Naive thymus-derived CD4-positive, alpha-beta T cell (primary cell): ENCODE measurements at regions of chr19 and their contacts with region 1.

Region 1: GRCh38 chr19:6737284-6738046 is at the start of gene GPR108:
- DNase-seq: peak; percentile 94 to 100 (median 99)
- ATAC-seq: peak; percentile 85
- H3K4me3 ChIP-seq: peak within 1 kb of the TSS; percentile 87
- H3K4me3 Mint-ChIP-seq: peak within 1 kb of the TSS; percentile 89 to 98 (median 96)
- H3K27ac ChIP-seq: peak within 1 kb of the TSS; percentile 86
- H3K27ac Mint-ChIP-seq: peak within 1 kb of the TSS; percentile 90 to 99 (median 96)
- H3K4me1 ChIP-seq: peaks cover 31 to 32% of the 10 kb centered on the region in 2 donors
- H3K4me1 Mint-ChIP-seq: peaks cover 24 to 41% (median 37%) of the 10 kb centered on the region in 7 donors
- H3K27me3 ChIP-seq: no peaks in the 10 kb centered on the region
- H3K27me3 Mint-ChIP-seq: peaks cover 0 to 3% (median 0%) of the 10 kb centered on the region in 5 donors
- total RNA-seq, gene GPR108: 36.1 to 81.6 (median 61.9) TPM

Region 2: GRCh38 chr19:5977785-5978605 is 759.5 kb before region 1 on chr19 and contains the start of gene RANBP3:
- CTCF ChIA-PET with region 1: no interaction called
- POLR2A ChIA-PET with region 1: no interaction called
- intact Hi-C with region 1: loop called in 1 of 2 experiments (anchors 10 kb)
- DNase-seq: peak; percentile 94 to 99 (median 99)
- ATAC-seq: peak; percentile 94
- H3K4me3 ChIP-seq: peak within 1 kb of the TSS; percentile 78
- H3K4me3 Mint-ChIP-seq: peak within 1 kb of the TSS; percentile 92 to 99 (median 96)
- H3K27ac ChIP-seq: peak within 1 kb of the TSS; percentile 94
- H3K27ac Mint-ChIP-seq: peak within 1 kb of the TSS; percentile 91 to 97 (median 95)
- H3K4me1 ChIP-seq: peaks cover 31 to 45% of the 10 kb centered on the region in 2 donors
- H3K4me1 Mint-ChIP-seq: peaks cover 42 to 65% (median 55%) of the 10 kb centered on the region in 7 donors
- H3K27me3 ChIP-seq: no peaks in the 10 kb centered on the region
- H3K27me3 Mint-ChIP-seq: peaks cover 0 to 2% (median 0%) of the 10 kb centered on the region in 5 donors
- total RNA-seq, gene RANBP3: 88.3 to 104 (median 94.0) TPM

Region 3: GRCh38 chr19:6424939-6425731 is 312.3 kb before region 1 on chr19:
- CTCF ChIA-PET with region 1: no interaction called
- POLR2A ChIA-PET with region 1: no interaction called
- intact Hi-C with region 1: loop called (anchors 1 kb)
- DNase-seq: peak; percentile 66 to 100 (median 99)
- ATAC-seq: peak; percentile 89
- H3K4me3 ChIP-seq: peak overlapping the region; percentile 39
- H3K4me3 Mint-ChIP-seq: peak overlapping the region; percentile 69 to 87 (median 78)
- H3K27ac ChIP-seq: peak overlapping the region; percentile 77
- H3K27ac Mint-ChIP-seq: peak overlapping the region; percentile 78 to 97 (median 94)
- H3K4me1 ChIP-seq: peaks cover 15 to 32% of the 10 kb centered on the region in 2 donors
- H3K4me1 Mint-ChIP-seq: peaks cover 18 to 48% (median 41%) of the 10 kb centered on the region in 7 donors
- H3K27me3 ChIP-seq: no peaks in the 10 kb centered on the region
- H3K27me3 Mint-ChIP-seq: no peaks in the 10 kb centered on the region

Region 4: GRCh38 chr19:6590827-6591319 is 146.6 kb before region 1 on chr19 and contains the start of gene CD70:
- CTCF ChIA-PET with region 1: no interaction called
- POLR2A ChIA-PET with region 1: no interaction called
- intact Hi-C with region 1: loop called in 1 of 2 experiments (anchors 2 kb)
- DNase-seq: peak in 6 of 9 donors; percentile 10 to 68 (median 17)
- ATAC-seq: peak; percentile 74
- H3K4me3 ChIP-seq: peak within 1 kb of the TSS; percentile 56
- H3K4me3 Mint-ChIP-seq: peak within 1 kb of the TSS; percentile 58 to 93 (median 82)
- H3K27ac ChIP-seq: no peak within 1 kb of the TSS
- H3K27ac Mint-ChIP-seq: peak within 1 kb of the TSS in 2 of 9 donors; percentile 1 to 87
- H3K4me1 ChIP-seq: peaks cover 30 to 46% of the 10 kb centered on the region in 2 donors
- H3K4me1 Mint-ChIP-seq: peaks cover 40 to 61% (median 47%) of the 10 kb centered on the region in 7 donors
- H3K27me3 ChIP-seq: peaks cover 0 to 20% of the 10 kb centered on the region in 2 donors
- H3K27me3 Mint-ChIP-seq: peaks cover 46 to 71% (median 66%) of the 10 kb centered on the region in 5 donors
- total RNA-seq, gene CD70: 1.2 to 39.6 TPM in 2 of 5 experiments, not detected in the others

Region 5: GRCh38 chr19:6767357-6768235 is 30.1 kb after region 1 on chr19 and contains the start of gene SH2D3A:
- CTCF ChIA-PET with region 1: interaction called, 10 read pairs
- POLR2A ChIA-PET with region 1: interaction called, 16 read pairs
- intact Hi-C with region 1: loop called (anchors 1 kb)
- DNase-seq: peak; percentile 80 to 98 (median 97)
- ATAC-seq: peak; percentile 84
- H3K4me3 ChIP-seq: peak within 1 kb of the TSS; percentile 82
- H3K4me3 Mint-ChIP-seq: peak within 1 kb of the TSS; percentile 88 to 99 (median 94)
- H3K27ac ChIP-seq: peak within 1 kb of the TSS; percentile 91
- H3K27ac Mint-ChIP-seq: peak within 1 kb of the TSS; percentile 89 to 98 (median 95)
- H3K4me1 ChIP-seq: peaks cover 24 to 41% of the 10 kb centered on the region in 2 donors
- H3K4me1 Mint-ChIP-seq: peaks cover 28 to 65% (median 55%) of the 10 kb centered on the region in 7 donors
- H3K27me3 ChIP-seq: no peaks in the 10 kb centered on the region
- H3K27me3 Mint-ChIP-seq: no peaks in the 10 kb centered on the region
- total RNA-seq, gene SH2D3A: 27.9 to 64.7 (median 57.4) TPM

Region 6: GRCh38 chr19:6925801-6926751 is 188.6 kb after region 1 on chr19:
- CTCF ChIA-PET with region 1: no interaction called
- POLR2A ChIA-PET with region 1: no interaction called
- intact Hi-C with region 1: loop called in 1 of 2 experiments (anchors 5 kb)
- DNase-seq: peak in 7 of 9 donors; percentile 2 to 47 (median 12)
- ATAC-seq: peak; percentile 93
- H3K4me3 ChIP-seq: peak overlapping the region; percentile 34
- H3K4me3 Mint-ChIP-seq: peak overlapping the region; percentile 36 to 89 (median 72)
- H3K27ac ChIP-seq: no peak overlapping the region
- H3K27ac Mint-ChIP-seq: peak overlapping the region in 8 of 9 donors; percentile 5 to 93 (median 90)
- H3K4me1 ChIP-seq: peaks cover 3 to 11% of the 10 kb centered on the region in 2 donors
- H3K4me1 Mint-ChIP-seq: peaks cover 13 to 28% (median 22%) of the 10 kb centered on the region in 7 donors
- H3K27me3 ChIP-seq: no peaks in the 10 kb centered on the region
- H3K27me3 Mint-ChIP-seq: no peaks in the 10 kb centered on the region

Region 7: DNA sequence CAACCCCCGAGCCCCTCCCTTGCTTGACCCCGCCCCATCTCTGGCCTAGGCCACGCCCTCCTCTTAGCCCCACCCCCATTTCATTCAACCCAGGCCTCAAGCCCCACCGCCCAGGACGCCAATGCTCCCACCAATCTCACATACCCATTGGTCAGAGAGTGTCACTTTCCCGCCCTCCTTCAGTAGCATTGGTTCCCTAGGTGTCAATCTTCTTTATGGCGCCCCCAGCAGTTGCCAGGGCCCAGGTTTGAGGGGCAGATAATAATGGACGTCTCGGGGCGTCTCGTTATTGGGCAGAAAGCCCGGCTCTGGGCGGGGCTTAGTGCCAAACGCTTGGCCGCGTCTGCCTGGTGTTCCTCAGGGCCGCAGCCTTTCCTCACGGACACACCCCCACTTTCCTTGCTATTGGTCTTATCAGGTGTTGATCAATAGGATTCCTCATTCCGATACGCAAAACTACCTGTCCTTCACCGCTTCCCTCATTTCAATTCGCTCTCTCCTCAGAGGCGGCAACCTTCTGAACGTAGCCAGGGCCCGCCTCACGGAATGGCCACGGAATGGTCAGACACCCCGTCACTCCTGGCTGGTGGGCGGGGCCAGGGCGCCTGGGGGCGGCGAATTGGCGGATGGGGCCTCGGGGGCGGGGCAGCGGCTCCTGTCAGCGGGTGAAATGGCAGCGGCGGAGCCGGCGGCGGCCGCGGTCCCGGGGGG is 1092.3 kb after region 1 on chr19 and contains the start of gene EVI5L:
- CTCF ChIA-PET with region 1: no interaction called
- POLR2A ChIA-PET with region 1: no interaction called
- intact Hi-C with region 1: loop called in 1 of 2 experiments (anchors 5 kb)
- DNase-seq: peak; percentile 99 to 100 (median 99)
- ATAC-seq: peak; percentile 88
- H3K4me3 ChIP-seq: peak within 1 kb of the TSS; percentile 47
- H3K4me3 Mint-ChIP-seq: peak within 1 kb of the TSS; percentile 77 to 88 (median 84)
- H3K27ac ChIP-seq: peak within 1 kb of the TSS; percentile 50
- H3K27ac Mint-ChIP-seq: peak within 1 kb of the TSS; percentile 4 to 94 (median 84)
- H3K4me1 ChIP-seq: peaks cover 5 to 9% of the 10 kb centered on the region in 2 donors
- H3K4me1 Mint-ChIP-seq: peaks cover 5 to 25% (median 23%) of the 10 kb centered on the region in 7 donors
- H3K27me3 ChIP-seq: no peaks in the 10 kb centered on the region
- H3K27me3 Mint-ChIP-seq: peaks cover 0 to 11% (median 0%) of the 10 kb centered on the region in 5 donors
- total RNA-seq, gene EVI5L: 7.4 to 12.2 (median 11.4) TPM